ENCODE measurements at regions of chr14 and their contacts with region 1.

Region 1: DNA sequence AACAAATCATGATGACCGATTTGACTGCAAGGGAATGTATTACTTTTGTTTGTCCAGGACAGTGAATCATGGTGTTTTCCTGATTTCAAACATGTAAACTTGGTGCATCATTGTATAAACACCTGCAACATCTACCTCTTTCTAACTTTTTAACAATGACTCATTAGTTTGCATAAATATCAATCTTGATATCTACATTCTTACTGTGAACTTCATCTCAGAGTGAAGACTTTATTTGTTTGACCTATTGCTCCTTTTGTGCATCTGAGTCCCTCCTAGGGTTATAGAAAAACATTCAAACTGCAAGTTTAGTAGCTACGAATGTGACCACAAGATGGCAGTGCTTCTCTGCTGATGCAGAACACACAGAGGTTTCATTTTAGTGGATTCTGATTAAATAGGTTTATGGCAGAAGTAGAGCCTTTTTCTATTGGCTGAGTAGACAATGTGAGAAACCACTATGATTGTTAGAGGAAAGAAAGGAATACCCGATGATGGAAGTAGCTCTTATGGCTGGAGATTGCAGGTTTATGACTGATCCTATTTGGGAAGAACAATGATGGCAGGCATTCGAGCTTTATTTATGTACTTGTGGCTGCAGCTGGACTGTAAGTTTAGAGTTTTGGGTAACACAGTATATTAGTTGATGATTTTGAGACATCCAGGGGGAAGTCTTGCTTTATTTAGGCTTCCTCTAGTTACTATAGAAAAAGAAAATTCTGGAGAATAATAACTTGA is 244.2 kb upstream of the OR4E1 start:
- DNase-seq: peak; percentile 68
- H3K4me3 ChIP-seq: no peak overlapping the region
- H3K27ac ChIP-seq: no peak overlapping the region
- H3K4me1 ChIP-seq: no peaks in the 10 kb centered on the region
- H3K27me3 ChIP-seq: no peaks in the 10 kb centered on the region
- CTCF ChIP-seq: peak; percentile 91

Region 2: GRCh38 chr14:21748869-21749303 is 169.0 kb before region 1 on chr14:
- CTCF ChIA-PET with region 1: no interaction called
- POLR2A ChIA-PET with region 1: no interaction called
- intact Hi-C with region 1: loop called (anchors 5 kb)
- DNase-seq: peak; percentile 90
- H3K4me3 ChIP-seq: no peak overlapping the region
- H3K27ac ChIP-seq: peak overlapping the region; percentile 44
- H3K4me1 ChIP-seq: peaks cover 28% of the 10 kb centered on the region
- H3K27me3 ChIP-seq: no peaks in the 10 kb centered on the region
- CTCF ChIP-seq: peak; percentile 93

Region 3: GRCh38 chr14:21825845-21826244 is 92.0 kb before region 1 on chr14:
- CTCF ChIA-PET with region 1: no interaction called
- POLR2A ChIA-PET with region 1: no interaction called
- intact Hi-C with region 1: no loop called
- DNase-seq: no peak
- H3K4me3 ChIP-seq: no peak overlapping the region
- H3K27ac ChIP-seq: no peak overlapping the region
- H3K4me1 ChIP-seq: no peaks in the 10 kb centered on the region
- H3K27me3 ChIP-seq: no peaks in the 10 kb centered on the region
- CTCF ChIP-seq: no peak

Region 4: GRCh38 chr14:23528555-23528954 is 1610.7 kb after region 1 on chr14:
- CTCF ChIA-PET with region 1: no interaction called
- POLR2A ChIA-PET with region 1: no interaction called
- intact Hi-C with region 1: no loop called
- DNase-seq: no peak
- H3K4me3 ChIP-seq: no peak overlapping the region
- H3K27ac ChIP-seq: no peak overlapping the region
- H3K4me1 ChIP-seq: peaks cover 14% of the 10 kb centered on the region
- H3K27me3 ChIP-seq: no peaks in the 10 kb centered on the region
- CTCF ChIP-seq: peak; percentile 39

Measured in A673 (cell line).